ENCODE measurements at regions of chr5 and their contacts with region 1.

Region 1: DNA sequence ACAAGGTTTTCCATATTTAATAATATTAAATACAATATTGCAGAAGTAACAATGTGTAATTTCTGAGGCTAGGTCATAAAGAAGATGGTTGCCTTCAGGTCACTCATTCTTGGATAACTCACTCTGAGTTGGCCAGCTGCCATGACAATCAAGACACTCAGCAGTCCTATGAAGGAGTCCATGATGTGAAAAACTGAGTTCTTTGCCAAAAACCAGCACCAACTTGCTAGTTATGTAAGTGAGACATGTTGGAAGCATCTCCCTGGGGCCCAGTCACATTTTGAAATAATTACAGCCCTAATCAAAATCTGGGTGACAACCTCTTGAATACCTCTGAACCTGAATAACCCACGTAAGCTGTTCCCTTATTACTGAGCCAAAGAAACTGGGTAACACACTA is 453.2 kb downstream of the CDH18 start:
- DNase-seq: no peak
- H3K4me3 ChIP-seq: no peak overlapping the region
- H3K27ac ChIP-seq: no peak overlapping the region
- H3K4me1 ChIP-seq: no peaks in the 10 kb centered on the region
- CTCF ChIP-seq: no peak

Region 2: DNA sequence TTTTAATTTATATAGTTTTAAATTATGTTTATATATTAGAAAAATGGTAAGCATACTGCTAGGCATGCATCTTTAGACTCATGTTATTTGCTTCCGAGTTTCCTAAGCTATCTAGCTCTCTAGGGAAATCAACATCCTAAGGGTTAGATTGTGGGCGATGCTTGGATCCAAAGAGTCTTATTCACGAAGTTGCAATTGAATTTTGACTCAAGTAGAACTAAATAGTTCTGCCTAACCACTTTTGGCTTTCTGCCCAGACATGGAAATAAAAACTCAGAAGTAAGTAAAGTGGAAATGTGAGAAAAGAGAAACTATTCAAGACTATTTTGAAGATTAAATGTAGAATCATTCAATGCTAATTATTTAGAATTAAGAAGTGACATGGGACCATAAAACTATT is 12.9 kb after region 1 on chr5:
- CTCF ChIA-PET with region 1: no interaction called
- POLR2A ChIA-PET with region 1: interaction called, 12 read pairs
- intact Hi-C with region 1: no loop called
- DNase-seq: no peak
- H3K4me3 ChIP-seq: no peak overlapping the region
- H3K27ac ChIP-seq: no peak overlapping the region
- H3K4me1 ChIP-seq: no peaks in the 10 kb centered on the region
- CTCF ChIP-seq: no peak